WTC11 (cell line): ENCODE measurements at regions of chr17 and their contacts with region 1.

Region 1: GRCh38 chr17:49434821-49435670 is 20.4 kb upstream of the PHB1 start:
- DNase-seq: peak; percentile 87
- ATAC-seq: peak; percentile 70
- H3K4me3 Mint-ChIP-seq: no peak overlapping the region
- H3K27ac Mint-ChIP-seq: no peak overlapping the region
- H3K4me1 Mint-ChIP-seq: peaks cover 26% of the 10 kb centered on the region
- H3K27me3 Mint-ChIP-seq: peaks cover 21% of the 10 kb centered on the region
- CTCF ChIP-seq: peak; percentile 96

Region 2: DNA sequence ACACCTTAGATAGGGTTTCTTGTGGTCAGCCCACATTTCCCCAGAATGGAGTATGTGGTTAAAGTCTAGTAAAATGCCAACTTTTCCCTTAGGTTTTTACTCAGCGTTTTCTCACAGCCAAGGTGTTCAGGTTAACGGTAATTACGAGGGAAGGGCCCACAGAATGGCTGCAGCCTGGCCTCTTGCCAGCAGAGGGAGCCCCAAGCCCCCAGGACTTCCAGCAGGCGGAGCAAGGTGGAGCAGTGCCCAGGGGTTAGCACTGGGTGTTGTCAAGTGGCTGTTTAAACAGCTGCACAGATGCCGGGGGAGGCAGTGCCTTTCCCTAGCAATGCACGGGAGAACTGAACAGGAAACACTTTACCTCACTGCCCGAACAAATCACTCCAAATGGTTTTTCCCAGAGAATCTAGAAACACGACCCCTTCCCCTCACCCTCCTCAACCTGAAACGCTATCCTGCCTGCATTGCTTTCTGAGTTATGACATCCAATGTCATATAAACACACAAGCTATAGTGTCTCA is 27.0 kb before region 1 on chr17:
- CTCF ChIA-PET with region 1: interaction called, 18 read pairs
- POLR2A ChIA-PET with region 1: no interaction called
- DNase-seq: peak; percentile 91
- ATAC-seq: peak; percentile 99
- H3K4me3 Mint-ChIP-seq: no peak overlapping the region
- H3K27ac Mint-ChIP-seq: 0 out of 2 replicates have a peak overlapping the region, but pooled peaks have one; percentile 73
- H3K4me1 Mint-ChIP-seq: no peaks in the 10 kb centered on the region
- H3K27me3 Mint-ChIP-seq: no peaks in the 10 kb centered on the region
- CTCF ChIP-seq: peak; percentile 91

Region 3: GRCh38 chr17:49414622-49415350 is 20.3 kb before region 1 on chr17 and contains the start of gene PHB1:
- CTCF ChIA-PET with region 1: interaction called, 15 read pairs
- POLR2A ChIA-PET with region 1: no interaction called
- DNase-seq: peak; percentile 96
- ATAC-seq: peak; percentile 99
- H3K4me3 Mint-ChIP-seq: peak within 1 kb of the TSS; percentile 100
- H3K27ac Mint-ChIP-seq: peak within 1 kb of the TSS; percentile 94
- H3K4me1 Mint-ChIP-seq: 0 out of 2 replicates have a peak, but pooled peaks cover 8% of the 10 kb centered on the region
- H3K27me3 Mint-ChIP-seq: peaks cover 8% of the 10 kb centered on the region; the same call in 1 of the 2 replicates
- CTCF ChIP-seq: no peak
- total RNA-seq, gene PHB1: 350 to 375 TPM (median 362 TPM) in 3 replicates

Region 4: DNA sequence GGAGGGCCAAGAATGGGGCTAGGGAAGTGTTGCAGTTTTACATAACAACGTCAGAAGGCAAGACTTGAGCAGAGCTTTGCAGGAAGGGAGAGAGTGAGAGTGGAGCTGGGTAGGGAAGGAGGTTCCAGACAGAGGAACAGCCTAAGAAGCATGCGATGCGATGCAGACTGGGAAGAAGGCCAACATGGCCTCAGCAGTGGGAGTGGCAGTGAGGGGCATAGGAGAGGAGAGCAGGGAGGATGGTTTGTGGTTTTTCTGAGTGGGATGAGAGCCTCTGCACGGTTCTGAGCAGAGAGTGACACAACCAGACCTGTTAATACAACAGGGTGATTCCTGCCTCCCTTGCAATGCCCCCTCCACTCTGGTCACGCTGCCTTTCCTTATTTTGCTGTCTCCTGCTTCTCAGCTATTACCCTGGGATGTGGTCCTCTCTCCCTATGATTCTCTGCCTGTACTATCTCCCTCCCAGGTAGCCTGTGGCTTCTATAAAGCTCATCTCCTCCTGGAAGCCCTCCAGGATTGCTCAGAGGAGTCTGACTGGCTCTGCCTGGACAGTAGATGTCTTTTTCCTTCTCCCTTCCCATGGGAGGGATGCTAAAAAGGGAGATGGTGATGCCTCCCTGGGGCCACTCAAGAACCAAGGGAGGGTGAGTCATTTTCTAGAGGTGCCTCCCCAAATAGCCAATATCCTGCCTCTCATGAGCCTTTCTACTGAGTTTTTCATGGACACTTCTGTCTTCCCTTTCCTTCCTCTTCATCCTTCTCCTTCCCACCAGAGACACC is 21.3 kb after region 1 on chr17:
- CTCF ChIA-PET with region 1: interaction called, 18 read pairs
- POLR2A ChIA-PET with region 1: no interaction called
- DNase-seq: no peak
- ATAC-seq: no peak
- H3K4me3 Mint-ChIP-seq: no peak overlapping the region
- H3K27ac Mint-ChIP-seq: peak overlapping the region; percentile 6; the same call in 1 of the 2 replicates
- H3K4me1 Mint-ChIP-seq: peaks cover 31% of the 10 kb centered on the region
- H3K27me3 Mint-ChIP-seq: no peaks in the 10 kb centered on the region; the same call in 1 of the 2 replicates
- CTCF ChIP-seq: no peak

Region 5: DNA sequence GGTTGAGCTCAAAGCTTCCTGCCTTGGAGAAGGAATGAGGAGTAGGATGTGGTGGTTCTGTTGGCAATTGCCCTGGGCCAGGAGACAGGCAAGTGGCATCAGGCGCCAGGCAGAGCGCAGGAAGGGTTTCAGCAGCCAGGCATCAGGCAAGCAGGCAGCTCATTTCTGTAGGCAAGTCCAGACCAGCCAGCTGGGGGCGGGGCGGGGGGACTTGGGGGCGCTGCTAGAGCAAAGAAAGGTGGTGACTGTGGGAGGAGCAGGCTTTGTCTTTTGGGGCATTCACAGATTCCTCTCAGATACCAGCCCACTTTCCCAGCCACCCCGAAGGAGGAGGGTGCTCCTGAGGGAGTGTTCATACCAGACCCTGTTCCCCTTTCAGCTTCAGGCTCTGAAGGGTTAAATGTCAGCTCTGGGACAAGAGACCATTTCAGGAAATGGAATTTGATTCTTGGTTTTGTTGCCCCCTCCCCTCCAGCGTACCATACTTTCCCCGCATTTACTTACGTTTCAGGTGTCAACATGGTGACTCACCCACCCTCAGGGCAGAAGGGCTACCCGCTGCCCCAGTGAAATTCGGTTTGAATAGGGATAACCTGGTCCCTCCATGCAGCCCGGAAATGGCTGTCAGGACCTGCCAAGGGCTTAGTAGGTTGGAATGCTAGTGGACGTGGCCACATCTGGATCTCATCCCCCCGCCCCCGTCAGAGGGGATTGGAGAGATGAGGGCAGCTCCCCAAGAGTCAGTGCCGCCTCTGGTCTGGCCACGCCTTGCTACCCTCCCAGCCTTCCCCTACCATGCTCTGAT is 73.2 kb after region 1 on chr17:
- CTCF ChIA-PET with region 1: interaction called, 22 read pairs
- POLR2A ChIA-PET with region 1: no interaction called
- DNase-seq: peak; percentile 78
- ATAC-seq: peak; percentile 73
- H3K4me3 Mint-ChIP-seq: peak overlapping the region; percentile 49
- H3K27ac Mint-ChIP-seq: peak overlapping the region; percentile 85
- H3K4me1 Mint-ChIP-seq: peaks cover 60% of the 10 kb centered on the region
- H3K27me3 Mint-ChIP-seq: peaks cover 7% of the 10 kb centered on the region; the same call in 1 of the 2 replicates
- CTCF ChIP-seq: no peak

Region 6: DNA sequence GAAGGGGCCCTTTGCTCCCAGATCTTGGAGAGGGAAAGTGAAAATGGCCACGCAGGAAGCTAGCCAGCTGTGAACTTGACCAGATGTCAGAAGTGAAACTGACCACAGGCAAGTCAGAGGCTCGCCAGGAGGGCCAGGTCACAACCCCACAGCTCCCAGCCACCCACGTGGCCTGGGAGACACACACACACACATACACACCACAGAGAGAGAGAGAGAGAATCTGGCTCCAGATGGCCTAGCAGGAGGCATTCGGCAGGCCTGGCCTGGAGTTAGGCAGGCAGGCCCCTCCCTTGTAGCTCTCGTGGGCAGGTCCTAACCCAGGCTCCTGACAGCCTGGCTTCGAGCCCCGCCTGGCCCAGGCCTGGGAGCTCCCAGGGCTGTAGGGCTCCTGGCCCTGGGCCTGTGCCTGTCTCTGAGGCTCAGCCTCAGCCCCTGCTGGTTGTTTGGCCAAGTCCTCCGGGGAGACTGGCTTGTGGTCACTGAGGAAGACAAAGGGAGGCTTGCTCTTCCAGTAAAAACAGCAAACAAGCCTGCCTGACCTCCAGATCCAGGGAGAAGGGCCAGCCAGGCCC is 80.2 kb after region 1 on chr17:
- CTCF ChIA-PET with region 1: interaction called, 25 read pairs
- POLR2A ChIA-PET with region 1: interaction called, 8 read pairs
- DNase-seq: peak; percentile 73
- ATAC-seq: peak; percentile 92
- H3K4me3 Mint-ChIP-seq: no peak overlapping the region
- H3K27ac Mint-ChIP-seq: peak overlapping the region; percentile 75
- H3K4me1 Mint-ChIP-seq: peaks cover 53% of the 10 kb centered on the region
- H3K27me3 Mint-ChIP-seq: no peaks in the 10 kb centered on the region; the same call in 1 of the 2 replicates
- CTCF ChIP-seq: no peak